WTC11 (cell line): ENCODE measurements at regions of chr6 and their contacts with region 1.

Region 1: DNA sequence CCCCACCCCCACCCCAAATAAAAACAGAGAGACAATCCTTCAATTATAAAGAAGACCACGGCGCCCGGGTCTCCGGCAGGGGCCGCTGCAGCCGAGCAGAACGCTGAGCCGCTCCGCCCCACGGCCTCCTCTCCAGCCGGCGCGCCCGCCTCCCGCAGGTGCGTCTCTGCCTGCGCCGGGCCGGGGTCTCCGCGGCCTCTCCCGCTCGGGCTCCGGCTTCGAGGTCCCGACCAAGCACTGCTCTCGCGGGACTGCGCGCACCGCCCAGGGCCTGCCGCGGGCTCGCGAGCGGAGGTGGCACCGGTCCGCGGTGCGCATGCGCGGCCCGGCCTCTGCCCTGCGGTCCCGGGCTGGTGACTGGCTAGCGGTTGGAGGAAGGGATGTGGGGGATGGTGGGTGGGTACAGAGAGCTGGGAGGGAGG is 241 bp upstream of the SIRT5 start:
- DNase-seq: peak; percentile 95
- ATAC-seq: peak; percentile 90
- H3K4me3 Mint-ChIP-seq: peak overlapping the region; percentile 92
- H3K27ac Mint-ChIP-seq: peak overlapping the region; percentile 98
- H3K4me1 Mint-ChIP-seq: peaks cover 36% of the 10 kb centered on the region
- H3K27me3 Mint-ChIP-seq: no peaks in the 10 kb centered on the region
- CTCF ChIP-seq: no peak; the same call in 1 of the 2 replicates

Region 2: GRCh38 chr6:13328076-13328874 is 245.9 kb before region 1 on chr6 and contains the start of gene TBC1D7:
- CTCF ChIA-PET with region 1: interaction called, 19 read pairs
- POLR2A ChIA-PET with region 1: interaction called, 7 read pairs
- DNase-seq: peak; percentile 93
- ATAC-seq: peak; percentile 88
- H3K4me3 Mint-ChIP-seq: peak within 1 kb of the TSS; percentile 89
- H3K27ac Mint-ChIP-seq: peak within 1 kb of the TSS; percentile 94
- H3K4me1 Mint-ChIP-seq: peaks cover 22% of the 10 kb centered on the region
- H3K27me3 Mint-ChIP-seq: no peaks in the 10 kb centered on the region
- CTCF ChIP-seq: no peak
- total RNA-seq, gene TBC1D7: 44.9 to 47.6 TPM (median 45.3 TPM) in 3 replicates

Region 3: DNA sequence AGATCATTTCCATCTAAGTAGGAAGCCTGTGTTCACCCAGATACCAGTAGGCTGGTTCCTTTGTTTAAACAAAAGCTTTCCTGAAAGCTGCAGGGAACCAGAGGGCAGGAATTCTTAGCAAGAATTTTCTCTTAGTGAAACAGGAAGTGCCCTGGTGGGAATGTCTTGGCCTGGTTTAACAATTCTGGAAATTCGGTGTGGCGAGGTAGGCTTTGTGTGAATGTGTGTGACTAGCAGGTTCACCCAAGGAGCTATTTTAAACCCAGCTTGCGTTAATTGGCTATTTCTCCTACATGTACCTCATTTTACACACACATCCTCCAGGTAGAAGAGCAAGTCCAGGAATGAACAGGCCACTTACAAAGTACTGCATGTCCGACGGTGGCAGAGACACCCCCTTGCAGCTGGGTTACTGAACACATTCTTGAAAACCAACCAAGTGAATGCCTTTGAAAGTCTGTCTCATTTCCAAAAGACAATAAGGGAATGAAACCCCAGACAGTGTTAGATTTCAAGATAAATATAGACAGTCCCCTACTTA is 151.4 kb before region 1 on chr6:
- CTCF ChIA-PET with region 1: interaction called, 11 read pairs
- POLR2A ChIA-PET with region 1: interaction called, 5 read pairs
- DNase-seq: peak; percentile 56
- ATAC-seq: peak; percentile 91
- H3K4me3 Mint-ChIP-seq: peak overlapping the region; percentile 53
- H3K27ac Mint-ChIP-seq: peak overlapping the region; percentile 100
- H3K4me1 Mint-ChIP-seq: peaks cover 93% of the 10 kb centered on the region
- H3K27me3 Mint-ChIP-seq: no peaks in the 10 kb centered on the region
- CTCF ChIP-seq: no peak

Region 4: DNA sequence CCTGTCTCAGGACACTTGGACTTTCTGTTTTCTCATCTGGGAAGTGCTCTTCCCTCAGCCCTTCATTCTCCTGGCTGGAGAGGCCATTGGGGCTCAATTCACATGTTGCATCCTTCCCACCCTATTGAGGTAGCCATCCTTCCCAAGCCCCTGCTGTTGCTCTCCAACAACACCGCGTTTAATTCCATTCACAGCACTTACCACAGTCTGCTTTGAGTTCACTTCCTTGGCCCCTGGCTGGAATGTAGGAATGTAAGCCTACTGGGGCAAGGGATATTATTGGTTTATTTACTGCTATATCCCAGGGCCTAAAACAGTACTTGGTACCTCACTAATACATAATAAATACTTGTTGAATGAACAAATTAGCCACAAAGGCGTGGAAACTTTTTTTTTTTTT is 80.0 kb before region 1 on chr6:
- CTCF ChIA-PET with region 1: interaction called, 10 read pairs
- POLR2A ChIA-PET with region 1: no interaction called
- DNase-seq: no peak
- ATAC-seq: peak; percentile 57
- H3K4me3 Mint-ChIP-seq: no peak overlapping the region
- H3K27ac Mint-ChIP-seq: peak overlapping the region; percentile 30; the same call in 1 of the 2 replicates
- H3K4me1 Mint-ChIP-seq: peaks cover 32% of the 10 kb centered on the region
- H3K27me3 Mint-ChIP-seq: peaks cover 22% of the 10 kb centered on the region
- CTCF ChIP-seq: no peak

Region 5: DNA sequence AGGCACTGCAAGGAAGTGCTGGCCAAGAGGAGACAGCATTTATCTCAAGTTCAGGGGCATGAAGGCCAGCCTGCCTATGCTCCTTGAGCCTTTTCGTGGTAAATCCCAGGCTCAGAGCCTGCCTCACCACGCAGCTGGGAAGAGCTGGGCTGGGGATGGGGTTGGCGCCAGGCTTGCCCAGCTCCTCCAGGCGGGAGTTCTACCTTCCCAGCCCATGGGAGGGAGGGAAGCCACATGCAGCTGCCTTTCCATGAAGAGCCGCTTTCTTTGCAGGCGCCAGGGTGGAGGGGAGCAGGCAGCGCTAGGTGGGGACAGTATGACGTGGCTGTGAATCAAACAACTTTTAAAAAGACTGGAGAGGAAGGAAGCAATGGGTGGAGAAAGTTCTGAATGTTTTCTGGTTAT is 19.2 kb before region 1 on chr6:
- CTCF ChIA-PET with region 1: interaction called, 12 read pairs
- POLR2A ChIA-PET with region 1: interaction called, 9 read pairs
- DNase-seq: peak; percentile 70
- ATAC-seq: peak; percentile 98
- H3K4me3 Mint-ChIP-seq: peak overlapping the region; percentile 14; the same call in 1 of the 2 replicates
- H3K27ac Mint-ChIP-seq: peak overlapping the region; percentile 50
- H3K4me1 Mint-ChIP-seq: peaks cover 25% of the 10 kb centered on the region
- H3K27me3 Mint-ChIP-seq: no peaks in the 10 kb centered on the region
- CTCF ChIP-seq: no peak

Region 6: DNA sequence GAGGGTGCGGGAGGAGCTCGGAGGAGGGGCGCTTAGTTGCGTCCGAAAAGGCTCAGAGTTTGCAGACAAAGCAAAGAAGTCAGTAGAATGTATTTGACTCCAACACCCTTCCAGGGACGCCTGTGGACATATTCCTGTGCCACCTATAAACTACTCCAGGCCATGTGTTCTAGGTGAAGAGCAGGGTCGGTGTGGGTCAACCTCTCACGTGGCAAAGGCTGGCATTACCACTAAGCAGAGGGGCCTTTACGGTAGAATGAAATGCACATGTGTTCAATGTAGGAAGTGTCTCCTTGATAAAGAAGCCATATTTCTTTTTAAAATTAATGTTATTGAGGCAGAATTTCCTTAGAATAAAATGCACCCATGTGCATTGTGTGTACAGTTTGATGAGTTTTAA is 15.6 kb after region 1 on chr6:
- CTCF ChIA-PET with region 1: interaction called, 10 read pairs
- POLR2A ChIA-PET with region 1: interaction called, 3 read pairs
- DNase-seq: no peak
- ATAC-seq: no peak
- H3K4me3 Mint-ChIP-seq: no peak overlapping the region
- H3K27ac Mint-ChIP-seq: no peak overlapping the region
- H3K4me1 Mint-ChIP-seq: no peaks in the 10 kb centered on the region
- H3K27me3 Mint-ChIP-seq: no peaks in the 10 kb centered on the region
- CTCF ChIP-seq: no peak

Region 7: DNA sequence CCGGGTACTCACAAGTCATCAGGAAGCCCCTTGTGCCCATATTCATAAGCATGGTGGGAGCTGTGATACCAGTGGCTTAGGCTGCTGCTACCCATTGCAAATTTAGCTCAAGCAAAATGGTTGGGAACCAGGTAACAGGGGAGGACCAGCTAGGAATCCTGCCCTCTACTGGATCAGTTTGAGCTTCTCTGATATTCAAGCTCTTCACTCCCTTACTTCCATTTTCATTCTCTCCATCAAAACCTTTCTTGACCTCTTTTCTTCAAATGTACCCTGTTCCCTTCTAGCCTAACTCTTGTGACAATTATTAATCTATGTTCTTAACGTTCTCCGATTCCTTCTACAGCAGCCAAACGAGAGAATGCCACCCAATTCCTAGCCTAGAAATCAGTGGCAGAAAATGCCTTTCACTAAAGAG is 50.7 kb after region 1 on chr6:
- CTCF ChIA-PET with region 1: interaction called, 16 read pairs
- POLR2A ChIA-PET with region 1: no interaction called
- DNase-seq: peak; percentile 19
- ATAC-seq: peak; percentile 99
- H3K4me3 Mint-ChIP-seq: no peak overlapping the region
- H3K27ac Mint-ChIP-seq: peak overlapping the region; percentile 32
- H3K4me1 Mint-ChIP-seq: peaks cover 5% of the 10 kb centered on the region
- H3K27me3 Mint-ChIP-seq: no peaks in the 10 kb centered on the region
- CTCF ChIP-seq: 0 out of 2 replicates have a peak, but pooled peaks have one; percentile 28

Region 8: GRCh38 chr6:13762611-13763441 is 188.7 kb after region 1 on chr6:
- CTCF ChIA-PET with region 1: no interaction called
- POLR2A ChIA-PET with region 1: no interaction called
- DNase-seq: no peak
- ATAC-seq: no peak
- H3K4me3 Mint-ChIP-seq: no peak overlapping the region
- H3K27ac Mint-ChIP-seq: no peak overlapping the region
- H3K4me1 Mint-ChIP-seq: peaks cover 17% of the 10 kb centered on the region
- H3K27me3 Mint-ChIP-seq: no peaks in the 10 kb centered on the region
- CTCF ChIP-seq: no peak